ENCODE measurements at regions of chr5 and their contacts with region 1.

Region 1: GRCh38 chr5:147628058-147628895 is 118.4 kb upstream of the DPYSL3 start:
- DNase-seq: peak; percentile 64
- ATAC-seq: peak; percentile 98
- H3K4me3 ChIP-seq: no peak overlapping the region
- H3K27ac ChIP-seq: no peak overlapping the region
- H3K4me1 ChIP-seq: no peaks in the 10 kb centered on the region
- H3K27me3 ChIP-seq: peaks cover 37% of the 10 kb centered on the region
- CTCF ChIP-seq: peak; percentile 66 to 73 (median 70); a peak in 5 of 6 replicates
- POLR2A ChIP-seq: no peak
- RAD21 ChIP-seq: peak; percentile 85

Region 2: GRCh38 chr5:147675168-147675567 is 46.9 kb after region 1 on chr5:
- CTCF ChIA-PET with region 1: interaction called, 3 read pairs
- POLR2A ChIA-PET with region 1: no interaction called
- RAD21 ChIA-PET with region 1: no interaction called
- intact Hi-C with region 1: loop called (anchors 2 kb)
- DNase-seq: no peak
- ATAC-seq: no peak
- H3K4me3 ChIP-seq: no peak overlapping the region
- H3K27ac ChIP-seq: no peak overlapping the region
- H3K4me1 ChIP-seq: no peaks in the 10 kb centered on the region
- H3K27me3 ChIP-seq: peaks cover 5% of the 10 kb centered on the region
- CTCF ChIP-seq: peak in 2 of 3 experiments; percentile 4 to 13; a peak in 1 of 6 replicates
- POLR2A ChIP-seq: no peak
- RAD21 ChIP-seq: peak; percentile 18; the same call in 1 of the 2 replicates

Region 3: DNA sequence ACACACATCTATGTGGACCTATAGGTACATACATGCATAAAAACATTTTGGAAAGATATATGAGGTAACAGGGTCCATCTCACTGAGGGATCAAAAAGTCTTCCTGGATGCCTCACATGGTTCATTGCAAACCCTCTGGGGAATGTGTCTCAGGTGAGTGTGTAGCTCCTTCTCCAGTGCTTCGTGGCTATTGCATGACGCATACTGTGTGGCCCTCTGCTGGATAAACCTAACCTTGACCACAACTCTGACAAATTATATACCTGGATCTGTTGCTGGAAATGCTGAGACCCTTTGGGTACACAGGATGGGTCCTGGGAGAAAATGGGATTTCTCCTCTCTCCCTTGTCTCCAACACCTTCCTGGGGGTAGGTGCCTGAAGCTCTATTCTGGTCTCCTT is 62.3 kb after region 1 on chr5:
- CTCF ChIA-PET with region 1: interaction called, 8 read pairs
- POLR2A ChIA-PET with region 1: no interaction called
- RAD21 ChIA-PET with region 1: no interaction called
- intact Hi-C with region 1: loop called (anchors 1 kb)
- DNase-seq: peak; percentile 31
- ATAC-seq: peak; percentile 88
- H3K4me3 ChIP-seq: no peak overlapping the region
- H3K27ac ChIP-seq: no peak overlapping the region
- H3K4me1 ChIP-seq: no peaks in the 10 kb centered on the region
- H3K27me3 ChIP-seq: peaks cover 11% of the 10 kb centered on the region; the same call in 1 of the 2 replicates
- CTCF ChIP-seq: peak; percentile 18 to 53 (median 50); a peak in 4 of 6 replicates
- POLR2A ChIP-seq: no peak
- RAD21 ChIP-seq: peak; percentile 45

Region 4: GRCh38 chr5:147822686-147823491 is 194.6 kb after region 1 on chr5:
- CTCF ChIA-PET with region 1: interaction called, 35 read pairs
- POLR2A ChIA-PET with region 1: no interaction called
- RAD21 ChIA-PET with region 1: interaction called, 4 to 6 read pairs
- intact Hi-C with region 1: loop called (anchors 1 kb)
- DNase-seq: peak; percentile 60
- ATAC-seq: peak; percentile 96
- H3K4me3 ChIP-seq: no peak overlapping the region
- H3K27ac ChIP-seq: no peak overlapping the region
- H3K4me1 ChIP-seq: no peaks in the 10 kb centered on the region
- H3K27me3 ChIP-seq: peaks cover 17% of the 10 kb centered on the region
- CTCF ChIP-seq: peak; percentile 72 to 93 (median 73)
- POLR2A ChIP-seq: no peak
- RAD21 ChIP-seq: peak; percentile 92

Region 5: DNA sequence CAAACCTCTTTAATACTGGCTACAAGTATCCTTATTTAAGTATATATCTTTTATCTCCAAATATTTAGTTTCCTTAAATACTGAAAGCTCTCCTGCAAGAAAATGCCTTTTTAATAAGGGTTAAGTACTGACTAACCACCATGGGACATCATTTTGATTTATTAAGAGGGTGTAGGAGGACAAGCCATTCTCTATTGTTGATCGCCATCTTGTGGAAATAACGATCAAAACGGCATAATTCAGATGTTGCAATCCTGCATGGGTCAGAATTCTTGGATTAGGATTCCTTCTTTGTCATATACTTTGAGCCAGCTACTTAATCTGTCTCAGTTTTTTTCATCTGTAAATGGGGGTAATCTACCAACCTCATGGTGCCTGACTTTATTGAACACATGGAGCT is 306.8 kb after region 1 on chr5:
- CTCF ChIA-PET with region 1: interaction called, 5 read pairs
- POLR2A ChIA-PET with region 1: no interaction called
- RAD21 ChIA-PET with region 1: no interaction called
- intact Hi-C with region 1: loop called (anchors 2 kb)
- DNase-seq: peak; percentile 39
- ATAC-seq: peak; percentile 81
- H3K4me3 ChIP-seq: no peak overlapping the region
- H3K27ac ChIP-seq: no peak overlapping the region
- H3K4me1 ChIP-seq: no peaks in the 10 kb centered on the region
- H3K27me3 ChIP-seq: peaks cover 11% of the 10 kb centered on the region; the same call in 1 of the 2 replicates
- CTCF ChIP-seq: peak; percentile 22 to 76 (median 49); a peak in 4 of 6 replicates
- POLR2A ChIP-seq: no peak
- RAD21 ChIP-seq: peak; percentile 81

Measured in HCT116 (cell line).